ENCODE measurements at regions of chr6 and their contacts with region 1.

Region 1: DNA sequence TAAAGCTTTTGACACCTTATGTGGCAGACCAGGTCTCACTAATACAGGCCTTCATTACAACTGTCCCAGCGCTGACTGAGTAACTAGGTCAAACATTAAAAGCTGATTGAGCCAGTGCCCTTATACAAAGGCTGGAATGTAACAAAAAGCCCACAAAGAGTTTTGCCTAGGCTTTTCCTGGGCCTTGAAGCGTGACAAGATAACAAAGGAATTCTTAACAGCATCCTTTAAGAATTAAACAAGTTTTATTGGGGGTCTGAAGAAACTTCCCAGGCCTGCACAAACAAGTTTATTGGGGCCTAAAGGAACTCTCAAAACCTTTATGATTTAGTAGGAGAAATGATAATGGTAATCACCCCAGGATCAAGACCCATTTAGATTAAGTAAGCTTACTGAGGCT is 267.6 kb upstream of the FAM83B start:
- DNase-seq: no peak
- ATAC-seq: no peak
- H3K4me3 ChIP-seq: no peak overlapping the region
- H3K27ac ChIP-seq: no peak overlapping the region
- H3K4me1 ChIP-seq: no peaks in the 10 kb centered on the region
- H3K27me3 ChIP-seq: no peaks in the 10 kb centered on the region

Region 2: GRCh38 chr6:54335871-54336270 is 243.1 kb before region 1 on chr6:
- intact Hi-C with region 1: loop called in 1 of 4 experiments (anchors 10 kb)
- DNase-seq: no peak
- ATAC-seq: peak; percentile 29 to 66
- H3K4me3 ChIP-seq: no peak overlapping the region
- H3K27ac ChIP-seq: no peak overlapping the region
- H3K4me1 ChIP-seq: no peaks in the 10 kb centered on the region
- H3K27me3 ChIP-seq: no peaks in the 10 kb centered on the region

Region 3: GRCh38 chr6:54937371-54937770 is 358.4 kb after region 1 on chr6:
- intact Hi-C with region 1: no loop called
- DNase-seq: no peak
- ATAC-seq: no peak
- H3K4me3 ChIP-seq: no peak overlapping the region
- H3K27ac ChIP-seq: no peak overlapping the region
- H3K4me1 ChIP-seq: no peaks in the 10 kb centered on the region
- H3K27me3 ChIP-seq: no peaks in the 10 kb centered on the region